Testis (tissue), 5 donors: ENCODE measurements at regions of chr17 and their contacts with region 1.

Region 1: DNA sequence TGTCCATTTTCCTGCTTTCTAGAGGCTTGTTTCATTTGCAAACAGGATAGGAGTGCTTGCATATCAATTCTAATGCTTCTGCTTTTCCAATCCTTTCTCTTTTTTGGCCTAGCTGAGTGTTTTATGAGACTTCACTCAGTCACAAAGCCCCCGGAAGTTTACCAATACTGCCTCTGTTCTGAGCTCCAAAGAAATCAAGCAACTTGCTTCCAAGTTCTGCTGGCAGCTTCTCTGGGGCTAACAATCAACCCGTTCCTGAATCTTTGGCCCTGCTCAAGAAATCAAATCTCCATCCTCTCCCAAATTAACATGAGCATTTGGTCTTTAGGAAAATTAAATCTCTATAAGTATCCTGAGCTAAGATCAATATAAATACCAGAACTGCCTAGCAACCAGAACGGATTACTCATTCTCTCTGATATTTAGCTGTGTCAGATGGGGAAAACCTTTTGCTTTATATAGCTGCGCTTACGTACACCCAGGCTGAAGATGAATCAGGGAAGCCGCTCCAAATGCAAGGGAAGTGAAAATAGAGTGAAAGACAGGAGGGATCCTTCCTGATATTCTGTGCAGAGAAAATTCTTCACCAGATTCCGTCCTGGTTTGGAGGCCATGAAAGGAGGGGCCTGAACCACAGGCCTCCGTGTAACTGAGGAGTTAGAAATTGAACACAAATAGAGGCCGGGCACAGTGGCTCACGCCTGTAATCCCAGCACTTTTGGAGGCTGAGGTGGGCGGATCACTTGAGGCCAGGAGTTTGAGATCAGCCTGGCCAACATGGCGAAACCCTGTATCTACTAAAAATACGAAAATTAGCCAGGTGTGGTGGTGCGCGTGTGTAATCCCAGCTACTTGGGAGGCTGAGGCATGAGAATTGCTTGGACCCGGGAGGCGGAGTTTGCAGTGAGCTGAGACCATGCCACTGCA is 23.3 kb upstream of the GRB2 start:
- DNase-seq: no peak
- H3K4me3 ChIP-seq: no peak overlapping the region
- H3K27ac ChIP-seq: no peak overlapping the region
- H3K4me1 ChIP-seq: peaks cover 24% of the 10 kb centered on the region
- H3K27me3 ChIP-seq: no peaks in the 10 kb centered on the region
- CTCF ChIP-seq: no peak
- POLR2A ChIP-seq: no peak

Region 2: GRCh38 chr17:75490173-75490743 is 61.5 kb after region 1 on chr17:
- intact Hi-C with region 1: no loop called
- DNase-seq: no peak
- H3K4me3 ChIP-seq: no peak overlapping the region
- H3K27ac ChIP-seq: no peak overlapping the region
- H3K4me1 ChIP-seq: peaks cover 38% of the 10 kb centered on the region
- H3K27me3 ChIP-seq: no peaks in the 10 kb centered on the region
- CTCF ChIP-seq: no peak
- POLR2A ChIP-seq: no peak

Region 3: DNA sequence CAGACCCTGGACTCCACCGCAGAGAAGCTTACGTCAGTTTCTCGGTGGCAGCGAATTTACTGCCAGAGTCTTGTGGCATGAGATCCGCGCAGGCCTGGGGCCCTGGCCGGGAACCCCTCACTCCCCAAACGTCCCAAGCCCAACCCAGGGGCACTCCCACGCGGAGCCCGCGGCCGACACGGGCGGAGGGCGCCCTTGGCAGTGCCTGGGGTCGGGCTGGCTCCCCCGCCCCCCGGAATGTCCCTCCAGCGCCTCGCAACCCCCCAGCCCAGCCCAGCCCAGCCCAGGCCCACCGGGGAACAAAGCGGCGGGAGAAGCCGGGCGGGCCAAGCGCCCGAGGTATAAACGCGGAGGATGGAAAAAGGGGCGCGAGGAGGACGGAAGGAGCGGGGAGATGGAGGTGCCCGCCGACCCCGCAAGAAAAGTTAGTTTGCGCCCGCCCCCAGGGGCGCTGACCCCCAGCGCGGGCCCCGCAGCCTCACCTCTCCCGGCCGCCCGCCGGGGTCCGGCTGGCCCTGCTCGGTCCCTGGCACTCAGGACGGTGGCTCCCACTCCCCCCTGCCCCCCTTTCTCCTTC is 86.2 kb after region 1 on chr17:
- intact Hi-C with region 1: loop called (anchors 5 kb)
- DNase-seq: no peak
- H3K4me3 ChIP-seq: peak overlapping the region; percentile 78 to 94
- H3K27ac ChIP-seq: peak overlapping the region; percentile 77 to 89
- H3K4me1 ChIP-seq: peaks cover 27% of the 10 kb centered on the region
- H3K27me3 ChIP-seq: no peaks in the 10 kb centered on the region
- CTCF ChIP-seq: no peak
- POLR2A ChIP-seq: no peak